ENCODE measurements at regions of chr10 and their contacts with region 1.

Region 1: GRCh38 chr10:116931806-116932205 is 73.2 kb downstream of the SHTN1 start:
- DNase-seq: no peak
- H3K4me3 ChIP-seq: no peak overlapping the region
- H3K27ac ChIP-seq: no peak overlapping the region
- H3K4me1 ChIP-seq: no peaks in the 10 kb centered on the region
- H3K27me3 ChIP-seq: no peaks in the 10 kb centered on the region
- CTCF ChIP-seq: no peak

Region 2: DNA sequence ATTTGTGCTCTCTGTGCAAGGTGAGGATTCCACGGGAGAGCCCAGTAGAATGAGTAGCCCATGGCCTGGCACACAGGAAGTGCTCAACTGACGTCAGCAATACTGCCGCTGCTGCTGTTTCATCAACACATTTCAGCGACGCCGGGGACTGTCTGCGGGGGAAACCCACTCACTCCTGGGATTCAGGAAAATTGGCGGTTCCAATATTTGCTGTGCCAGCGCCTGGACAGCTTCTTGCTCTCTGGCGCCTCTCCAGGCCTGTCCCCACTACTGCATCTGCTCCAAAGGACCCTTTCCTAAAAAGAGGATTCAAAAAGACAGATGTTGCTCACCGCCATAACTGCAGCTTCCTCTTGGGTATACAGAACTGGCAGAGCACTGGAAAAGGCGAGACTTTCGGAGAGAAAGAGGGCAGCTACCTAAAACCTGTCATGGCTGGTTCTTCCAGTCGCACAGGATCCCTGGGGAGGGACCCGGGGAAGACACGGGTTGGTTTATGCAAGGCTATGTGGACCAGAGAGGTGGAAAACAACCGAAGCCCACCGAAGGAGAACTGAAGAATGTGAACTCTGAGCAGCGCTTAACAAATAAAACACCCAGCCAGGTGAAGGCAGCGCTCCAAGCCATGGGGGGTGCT is 122.2 kb before region 1 on chr10:
- intact Hi-C with region 1: loop called (anchors 10 kb)
- DNase-seq: peak; percentile 23
- H3K4me3 ChIP-seq: peak overlapping the region; percentile 10
- H3K27ac ChIP-seq: no peak overlapping the region
- H3K4me1 ChIP-seq: peaks cover 4% of the 10 kb centered on the region
- H3K27me3 ChIP-seq: no peaks in the 10 kb centered on the region
- CTCF ChIP-seq: peak; percentile 52

Measured in colonic mucosa (tissue), 4 donors.